MCF 10A (cell line): ENCODE measurements at regions of chr5 and their contacts with region 1.

Region 1: DNA sequence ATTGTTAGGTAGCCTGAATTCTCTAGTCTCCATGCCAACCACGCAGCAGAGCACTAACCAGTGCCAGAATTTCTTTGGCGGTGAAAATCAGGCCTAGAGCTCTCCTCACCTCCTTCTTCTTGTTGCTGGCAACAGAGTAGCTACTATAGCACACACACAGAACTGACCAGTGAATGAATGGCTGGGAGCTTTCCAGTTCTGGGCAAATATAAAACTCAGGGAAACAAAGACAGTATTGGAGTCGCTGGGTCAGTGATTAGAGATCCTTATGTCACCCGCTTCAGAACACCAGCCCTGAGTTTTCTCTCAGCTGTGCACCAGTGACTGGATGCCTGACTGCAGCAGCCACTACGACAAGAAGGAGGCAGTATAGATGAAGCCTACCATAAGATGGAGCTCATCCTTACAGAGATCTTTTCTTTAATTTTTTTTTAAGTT is 26.9 kb upstream of the FEM1C start:
- DNase-seq: no peak
- H3K4me3 Mint-ChIP-seq: no peak overlapping the region
- H3K27ac Mint-ChIP-seq: no peak overlapping the region
- H3K4me1 Mint-ChIP-seq: peaks cover 16% of the 10 kb centered on the region
- H3K27me3 Mint-ChIP-seq: no peaks in the 10 kb centered on the region
- CTCF ChIP-seq: no peak

Region 2: GRCh38 chr5:115372146-115372545 is 199.3 kb before region 1 on chr5:
- CTCF ChIA-PET with region 1: interaction called, 64 read pairs
- POLR2A ChIA-PET with region 1: interaction called, 5 read pairs
- intact Hi-C with region 1: loop called (anchors 1 kb)
- DNase-seq: no peak
- H3K4me3 Mint-ChIP-seq: no peak overlapping the region
- H3K27ac Mint-ChIP-seq: no peak overlapping the region
- H3K4me1 Mint-ChIP-seq: peaks cover 2% of the 10 kb centered on the region
- H3K27me3 Mint-ChIP-seq: no peaks in the 10 kb centered on the region
- CTCF ChIP-seq: no peak

Region 3: GRCh38 chr5:115389799-115390382 is 181.6 kb before region 1 on chr5:
- CTCF ChIA-PET with region 1: interaction called, 5 read pairs
- POLR2A ChIA-PET with region 1: no interaction called
- intact Hi-C with region 1: loop called (anchors 5 kb)
- DNase-seq: peak; percentile 23
- H3K4me3 Mint-ChIP-seq: no peak overlapping the region
- H3K27ac Mint-ChIP-seq: no peak overlapping the region
- H3K4me1 Mint-ChIP-seq: no peaks in the 10 kb centered on the region
- H3K27me3 Mint-ChIP-seq: no peaks in the 10 kb centered on the region
- CTCF ChIP-seq: peak; percentile 19

Region 4: DNA sequence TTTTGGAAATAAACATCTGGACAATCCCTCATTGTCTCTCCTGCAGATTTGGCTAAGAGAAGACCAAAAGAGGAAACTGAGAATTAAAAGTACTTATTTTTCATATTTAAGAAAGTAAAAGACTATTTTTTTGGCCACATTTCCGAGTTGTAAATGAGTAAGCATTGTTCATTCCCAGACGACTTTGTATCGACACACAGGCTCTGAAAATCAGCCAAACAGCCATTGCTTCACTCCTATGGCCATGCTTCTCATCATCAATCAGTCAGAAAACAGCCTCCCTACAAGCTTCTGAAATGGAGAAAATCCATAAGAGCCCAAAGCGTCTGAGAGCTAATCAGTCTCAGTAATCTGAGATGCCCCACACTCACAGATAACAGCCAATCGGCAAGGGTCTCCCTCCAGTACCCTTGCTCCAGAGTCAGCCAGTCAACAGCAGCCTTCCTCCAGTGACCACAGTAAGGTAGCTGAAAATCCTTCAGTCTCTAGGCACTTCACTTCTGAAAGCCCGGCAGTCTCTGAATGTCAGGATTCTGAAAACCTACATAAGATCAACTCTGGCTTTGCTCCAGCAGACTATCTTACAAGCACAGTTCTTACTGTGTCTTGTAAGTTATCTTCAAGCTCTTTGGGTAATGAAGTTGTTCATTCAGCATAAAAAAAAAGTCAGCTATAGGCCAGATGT is 214.1 kb after region 1 on chr5:
- CTCF ChIA-PET with region 1: no interaction called
- POLR2A ChIA-PET with region 1: no interaction called
- intact Hi-C with region 1: no loop called
- DNase-seq: no peak
- H3K4me3 Mint-ChIP-seq: no peak overlapping the region
- H3K27ac Mint-ChIP-seq: no peak overlapping the region
- H3K4me1 Mint-ChIP-seq: no peaks in the 10 kb centered on the region
- H3K27me3 Mint-ChIP-seq: peaks cover 65% of the 10 kb centered on the region
- CTCF ChIP-seq: no peak